GM18951 (cell line): ENCODE measurements at regions of chr4 and their contacts with region 1.

Region 1: DNA sequence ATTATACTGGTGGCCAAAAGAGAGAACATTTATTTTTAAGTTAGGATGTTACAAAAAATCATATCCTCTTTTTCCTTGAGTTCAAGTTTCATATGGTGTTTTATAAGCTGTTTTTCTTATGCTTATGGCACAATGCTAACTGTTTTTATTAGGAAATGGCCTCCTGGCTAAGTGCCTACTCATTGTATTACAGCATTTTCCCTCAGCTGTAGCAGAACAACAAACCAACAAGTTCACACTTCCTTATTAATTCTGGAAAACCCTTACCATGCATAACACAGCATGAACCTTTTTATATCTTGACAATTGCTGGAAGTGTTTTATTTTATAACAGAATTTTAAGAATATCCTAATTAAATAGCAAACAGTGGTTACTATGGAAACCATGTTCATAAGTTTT is 165.8 kb downstream of the GASK1B start:
- POLR2A ChIP-seq: no peak

Region 2: DNA sequence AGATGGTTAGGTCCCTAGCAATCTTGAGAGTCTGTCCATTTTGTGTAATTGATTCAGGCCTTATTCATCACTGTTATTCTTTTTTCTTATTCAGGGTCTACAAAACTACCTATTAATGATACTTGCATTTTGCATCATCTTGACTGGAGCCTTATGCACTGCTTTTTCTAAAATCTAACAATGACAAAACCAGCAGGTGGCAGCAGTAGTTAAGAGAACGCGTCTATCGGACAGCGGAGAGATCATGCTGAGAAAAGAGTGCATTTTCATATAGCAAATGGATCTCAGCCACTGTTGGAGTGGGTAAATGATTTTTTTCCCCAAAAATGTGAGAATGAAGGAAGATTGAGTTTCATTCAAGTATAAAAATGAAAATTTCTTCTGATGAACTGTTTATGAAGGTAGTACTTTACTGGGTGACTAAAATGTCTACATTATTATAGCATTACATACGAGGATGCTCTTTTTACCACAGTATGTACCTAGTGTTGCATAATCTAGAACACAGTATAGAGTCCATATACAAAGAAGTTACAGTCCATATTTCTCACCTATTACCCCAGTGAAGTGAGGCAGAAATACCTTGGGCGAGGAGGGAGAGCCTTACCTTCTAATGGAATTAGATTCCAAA is 246.5 kb after region 1 on chr4:
- in situ Hi-C with region 1: loop called (anchors 10 kb)
- POLR2A ChIP-seq: no peak

Region 3: DNA sequence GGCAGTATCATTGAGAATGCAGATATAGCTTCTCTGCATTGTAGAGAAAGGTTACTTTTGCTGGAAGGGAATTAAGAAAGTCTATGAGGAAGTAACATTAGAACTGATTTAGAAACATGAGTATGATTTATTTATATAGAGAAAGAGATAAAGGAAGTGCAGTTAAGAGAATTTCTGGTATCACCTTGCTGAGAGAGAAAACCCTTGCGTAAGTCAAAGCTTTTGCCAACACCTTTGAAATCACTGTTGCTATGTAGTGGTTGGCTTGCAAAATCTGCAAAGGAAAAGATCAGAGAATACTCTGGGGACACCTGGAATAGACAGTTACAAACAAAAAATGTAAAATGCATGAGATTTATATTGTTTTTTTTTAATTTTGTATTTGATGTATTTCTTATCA is 377.4 kb after region 1 on chr4:
- in situ Hi-C with region 1: no loop called
- POLR2A ChIP-seq: no peak